GM12878 (cell line): ENCODE measurements at regions of chr21 and their contacts with region 1.

Region 1: DNA sequence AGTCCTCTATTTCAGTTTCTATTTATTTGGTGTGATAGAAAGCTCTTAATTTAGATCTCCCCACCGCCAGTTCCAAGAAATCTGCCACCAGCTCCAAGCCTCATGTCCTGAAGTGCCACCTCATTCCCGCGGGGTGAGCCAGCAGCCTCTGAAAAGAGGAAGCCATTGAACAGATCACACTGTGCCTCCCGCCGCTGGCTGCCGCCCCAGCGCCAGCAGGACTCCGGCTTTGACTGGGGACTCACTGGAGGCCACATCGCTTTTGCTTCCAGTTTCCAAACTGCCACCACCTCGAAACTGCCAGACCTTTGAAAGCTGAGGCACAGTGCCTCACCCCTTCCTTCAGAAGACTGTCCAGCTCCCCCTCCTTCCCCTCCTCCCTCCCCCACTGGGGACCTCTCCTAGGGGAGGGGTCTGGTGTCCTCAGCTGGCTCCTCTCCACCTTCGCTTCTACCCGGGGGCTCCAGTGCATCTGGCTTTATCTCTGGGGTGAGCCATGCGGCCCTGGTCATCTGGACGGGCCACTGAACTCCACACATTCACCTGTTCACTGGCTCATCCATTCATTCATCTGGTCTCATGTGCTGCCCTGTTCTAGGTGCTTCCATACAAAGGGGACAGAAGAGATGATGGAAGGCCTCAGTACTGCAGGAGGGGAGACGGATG is 58.9 kb downstream of the VPS26C start:
- DNase-seq: peak; percentile 68
- ATAC-seq: peak; percentile 79
- H3K4me3 ChIP-seq: peak overlapping the region; percentile 43
- H3K27ac ChIP-seq: peak overlapping the region; percentile 96
- H3K4me1 ChIP-seq: peaks cover 40% of the 10 kb centered on the region
- H3K27me3 ChIP-seq: no peaks in the 10 kb centered on the region
- CTCF ChIP-seq: 0 out of 6 replicates have a peak, but pooled peaks of 1 of the 3 experiments have one; percentile 7
- EP300 ChIP-seq: peak in 1 of 2 experiments; percentile 39; a peak in 1 of 4 replicates
- POLR2A ChIP-seq: peak; percentile 68
- RAD21 ChIP-seq: 0 out of 2 replicates have a peak, but pooled peaks have one; percentile 1

Region 2: DNA sequence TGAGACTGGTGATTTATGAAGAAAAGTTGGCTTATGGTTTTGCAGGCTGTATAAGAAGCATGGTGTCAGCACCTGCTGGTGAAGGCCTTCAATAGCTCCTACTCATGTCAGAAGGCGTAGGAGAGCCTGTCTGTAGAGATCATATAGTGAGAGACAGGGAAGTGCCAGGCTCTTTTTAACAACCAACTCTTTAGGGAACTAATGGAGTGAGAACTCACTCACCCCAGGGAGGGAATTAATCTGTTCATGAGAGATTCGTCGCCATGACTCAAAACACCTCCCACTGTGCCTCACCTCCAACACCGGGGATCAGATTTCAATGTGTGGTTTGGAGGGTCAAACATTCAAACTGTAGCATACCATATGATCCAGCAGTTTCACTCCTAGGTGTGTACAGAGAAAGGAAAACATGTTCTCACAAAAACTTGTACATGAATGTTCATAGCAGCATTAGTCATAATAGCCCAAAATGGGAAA is 62.5 kb before region 1 on chr21:
- CTCF ChIA-PET with region 1: no interaction called
- POLR2A ChIA-PET with region 1: no interaction called
- RAD21 ChIA-PET with region 1: no interaction called
- SMC1A ChIA-PET with region 1: no interaction called
- in situ Hi-C with region 1: no loop called
- intact Hi-C with region 1: no loop called
- DNase-seq: no peak
- ATAC-seq: no peak
- H3K4me3 ChIP-seq: no peak overlapping the region
- H3K27ac ChIP-seq: no peak overlapping the region
- H3K4me1 ChIP-seq: no peaks in the 10 kb centered on the region
- H3K27me3 ChIP-seq: no peaks in the 10 kb centered on the region
- CTCF ChIP-seq: no peak
- EP300 ChIP-seq: no peak
- POLR2A ChIP-seq: no peak
- RAD21 ChIP-seq: no peak

Region 3: DNA sequence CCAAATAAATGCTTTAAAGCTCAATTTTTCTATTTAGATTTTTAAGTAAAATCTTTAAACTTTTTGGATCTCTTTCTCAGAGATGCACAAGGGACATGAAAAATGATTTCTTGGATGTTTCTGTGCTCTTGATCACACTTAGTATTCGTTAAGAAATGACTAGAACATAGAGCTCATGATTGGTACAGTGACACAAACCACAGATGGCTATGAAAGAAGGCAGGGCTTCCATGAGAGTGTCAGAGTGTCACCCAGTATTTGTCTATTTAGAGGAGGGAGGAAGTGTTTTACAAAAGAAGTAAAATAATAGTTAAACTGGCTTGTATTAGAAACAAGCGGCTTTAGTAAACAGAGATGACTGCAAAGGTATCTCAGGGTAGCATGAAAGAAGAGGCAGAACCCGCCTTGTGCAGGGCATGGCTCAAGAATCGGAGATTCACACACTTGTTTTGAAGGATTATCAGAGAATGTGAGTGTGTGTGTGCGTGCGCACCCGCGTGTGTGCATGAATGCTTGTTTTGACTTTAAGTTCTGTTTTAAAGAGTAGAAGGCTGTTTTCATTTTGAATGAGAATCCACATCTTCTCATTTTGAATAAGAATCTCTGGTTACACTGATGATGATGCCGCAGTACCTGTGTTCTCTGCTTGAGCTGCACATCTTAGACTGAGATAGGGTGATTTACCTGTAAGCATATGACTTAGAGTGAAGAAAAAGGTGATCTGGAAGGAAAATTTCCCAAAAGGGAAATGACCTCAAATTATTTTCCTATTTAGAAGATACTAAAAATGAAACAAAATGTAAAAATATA is 23.2 kb before region 1 on chr21:
- CTCF ChIA-PET with region 1: no interaction called
- POLR2A ChIA-PET with region 1: interaction called, 5 read pairs
- RAD21 ChIA-PET with region 1: interaction called, 11 read pairs
- SMC1A ChIA-PET with region 1: interaction called, 4 read pairs
- in situ Hi-C with region 1: no loop called
- intact Hi-C with region 1: no loop called
- DNase-seq: no peak
- ATAC-seq: peak; percentile 88
- H3K4me3 ChIP-seq: no peak overlapping the region
- H3K27ac ChIP-seq: no peak overlapping the region
- H3K4me1 ChIP-seq: 0 out of 2 replicates have a peak, but pooled peaks cover 5% of the 10 kb centered on the region
- H3K27me3 ChIP-seq: no peaks in the 10 kb centered on the region
- CTCF ChIP-seq: no peak
- EP300 ChIP-seq: no peak
- POLR2A ChIP-seq: no peak
- RAD21 ChIP-seq: no peak

Region 4: GRCh38 chr21:37193006-37193405 is 15.2 kb before region 1 on chr21:
- CTCF ChIA-PET with region 1: interaction called, 5 read pairs
- POLR2A ChIA-PET with region 1: interaction called, 12 read pairs
- RAD21 ChIA-PET with region 1: interaction called, 7 read pairs
- SMC1A ChIA-PET with region 1: interaction called, 5 read pairs
- in situ Hi-C with region 1: no loop called
- intact Hi-C with region 1: no loop called
- DNase-seq: no peak
- ATAC-seq: no peak
- H3K4me3 ChIP-seq: no peak overlapping the region
- H3K27ac ChIP-seq: no peak overlapping the region
- H3K4me1 ChIP-seq: no peaks in the 10 kb centered on the region
- H3K27me3 ChIP-seq: no peaks in the 10 kb centered on the region
- CTCF ChIP-seq: no peak
- EP300 ChIP-seq: no peak
- POLR2A ChIP-seq: no peak
- RAD21 ChIP-seq: no peak

Region 5: GRCh38 chr21:37220981-37221664 is 12.9 kb after region 1 on chr21:
- CTCF ChIA-PET with region 1: interaction called, 9 read pairs
- POLR2A ChIA-PET with region 1: interaction called, 3 read pairs
- RAD21 ChIA-PET with region 1: interaction called, 4 read pairs
- SMC1A ChIA-PET with region 1: interaction called, 15 read pairs
- in situ Hi-C with region 1: no loop called
- intact Hi-C with region 1: no loop called
- DNase-seq: peak; percentile 86
- ATAC-seq: peak; percentile 96
- H3K4me3 ChIP-seq: peak overlapping the region; percentile 91
- H3K27ac ChIP-seq: peak overlapping the region; percentile 73
- H3K4me1 ChIP-seq: peaks cover 9% of the 10 kb centered on the region
- H3K27me3 ChIP-seq: no peaks in the 10 kb centered on the region
- CTCF ChIP-seq: peak; percentile 54 to 84 (median 62)
- EP300 ChIP-seq: no peak
- POLR2A ChIP-seq: peak; percentile 92
- RAD21 ChIP-seq: peak; percentile 77

Region 6: GRCh38 chr21:37232274-37233018 is 24.3 kb after region 1 on chr21:
- CTCF ChIA-PET with region 1: interaction called, 4 read pairs
- POLR2A ChIA-PET with region 1: interaction called, 3 read pairs
- RAD21 ChIA-PET with region 1: interaction called, 3 read pairs
- SMC1A ChIA-PET with region 1: interaction called, 10 read pairs
- in situ Hi-C with region 1: no loop called
- intact Hi-C with region 1: no loop called
- DNase-seq: no peak
- ATAC-seq: peak; percentile 96
- H3K4me3 ChIP-seq: peak overlapping the region; percentile 39; the same call in 1 of the 2 replicates
- H3K27ac ChIP-seq: peak overlapping the region; percentile 87
- H3K4me1 ChIP-seq: peaks cover 19% of the 10 kb centered on the region
- H3K27me3 ChIP-seq: no peaks in the 10 kb centered on the region
- CTCF ChIP-seq: no peak
- EP300 ChIP-seq: peak; percentile 32 to 68; a peak in 1 of 4 replicates
- POLR2A ChIP-seq: no peak
- RAD21 ChIP-seq: no peak

Region 7: GRCh38 chr21:37257967-37258877 is 50.0 kb after region 1 on chr21:
- CTCF ChIA-PET with region 1: no interaction called
- POLR2A ChIA-PET with region 1: interaction called, 7 read pairs
- RAD21 ChIA-PET with region 1: interaction called, 13 read pairs
- SMC1A ChIA-PET with region 1: interaction called, 14 read pairs
- in situ Hi-C with region 1: no loop called
- intact Hi-C with region 1: loop called (anchors 5 kb)
- DNase-seq: peak; percentile 87
- ATAC-seq: peak; percentile 83
- H3K4me3 ChIP-seq: peak overlapping the region; percentile 73
- H3K27ac ChIP-seq: peak overlapping the region; percentile 94
- H3K4me1 ChIP-seq: 0 out of 2 replicates have a peak, but pooled peaks cover 5% of the 10 kb centered on the region
- H3K27me3 ChIP-seq: no peaks in the 10 kb centered on the region
- CTCF ChIP-seq: no peak
- EP300 ChIP-seq: no peak
- POLR2A ChIP-seq: peak; percentile 68
- RAD21 ChIP-seq: no peak

Region 8: GRCh38 chr21:37267269-37268184 is 59.3 kb after region 1 on chr21 and contains the start of gene VPS26C:
- CTCF ChIA-PET with region 1: interaction called, 5 read pairs
- POLR2A ChIA-PET with region 1: interaction called, 8 read pairs
- RAD21 ChIA-PET with region 1: interaction called, 6 read pairs
- SMC1A ChIA-PET with region 1: interaction called, 11 read pairs
- in situ Hi-C with region 1: no loop called
- intact Hi-C with region 1: no loop called
- DNase-seq: peak; percentile 99
- ATAC-seq: peak; percentile 95
- H3K4me3 ChIP-seq: peak within 1 kb of the TSS; percentile 84
- H3K27ac ChIP-seq: peak within 1 kb of the TSS; percentile 94
- H3K4me1 ChIP-seq: no peaks in the 10 kb centered on the region
- H3K27me3 ChIP-seq: no peaks in the 10 kb centered on the region
- CTCF ChIP-seq: no peak
- EP300 ChIP-seq: peak; percentile 43 to 49; a peak in 1 of 4 replicates
- POLR2A ChIP-seq: peak; percentile 96
- RAD21 ChIP-seq: no peak
- polyA plus RNA-seq, gene VPS26C: 36.8 to 39.6 TPM